ENCODE measurements at regions of chr1 and their contacts with region 1.

Region 1: GRCh38 chr1:110312188-110313121 is 26.7 kb upstream of the RBM15 start:
- DNase-seq: peak; percentile 91
- H3K4me3 Mint-ChIP-seq: no peak overlapping the region
- H3K27ac Mint-ChIP-seq: no peak overlapping the region
- H3K4me1 Mint-ChIP-seq: no peaks in the 10 kb centered on the region
- H3K27me3 Mint-ChIP-seq: no peaks in the 10 kb centered on the region

Region 2: DNA sequence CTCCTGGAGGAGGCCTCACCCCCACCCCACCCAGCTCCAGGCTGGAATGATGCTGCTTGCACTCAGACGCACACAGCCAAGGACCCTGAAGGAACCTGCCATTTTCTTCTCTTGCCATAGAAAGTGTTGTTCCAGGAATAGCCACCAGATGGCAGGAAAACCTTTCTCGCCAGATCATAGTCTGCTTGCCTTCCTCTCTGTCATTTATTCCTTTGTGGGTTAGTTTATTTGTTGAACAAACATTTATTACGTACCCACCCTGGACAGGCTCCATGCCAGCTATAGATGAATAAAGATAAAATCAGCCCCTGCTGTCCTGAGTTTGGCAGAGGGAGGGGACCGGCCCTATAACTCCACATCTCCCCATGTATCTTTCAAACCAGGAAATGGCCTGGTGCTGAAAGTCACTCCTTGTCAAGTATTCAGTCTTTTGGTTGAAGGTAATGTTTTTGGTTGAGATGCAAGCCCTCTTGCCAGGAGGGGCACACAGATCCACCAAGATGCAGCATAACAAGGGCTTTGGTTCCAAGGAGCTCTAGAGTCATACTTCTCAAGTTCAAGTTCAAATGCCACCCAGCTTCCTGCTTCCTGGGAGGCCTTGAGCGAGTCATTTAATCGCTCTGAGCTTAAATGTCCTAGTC is 109.3 kb before region 1 on chr1:
- intact Hi-C with region 1: loop called (anchors 1 kb)
- DNase-seq: peak; percentile 94
- H3K4me3 Mint-ChIP-seq: no peak overlapping the region
- H3K27ac Mint-ChIP-seq: peak overlapping the region; percentile 90
- H3K4me1 Mint-ChIP-seq: peaks cover 13% of the 10 kb centered on the region
- H3K27me3 Mint-ChIP-seq: no peaks in the 10 kb centered on the region

Region 3: GRCh38 chr1:110272045-110272444 is 40.4 kb before region 1 on chr1:
- intact Hi-C with region 1: no loop called
- DNase-seq: no peak
- H3K4me3 Mint-ChIP-seq: no peak overlapping the region
- H3K27ac Mint-ChIP-seq: no peak overlapping the region
- H3K4me1 Mint-ChIP-seq: no peaks in the 10 kb centered on the region
- H3K27me3 Mint-ChIP-seq: peaks cover 28% of the 10 kb centered on the region

Region 4: DNA sequence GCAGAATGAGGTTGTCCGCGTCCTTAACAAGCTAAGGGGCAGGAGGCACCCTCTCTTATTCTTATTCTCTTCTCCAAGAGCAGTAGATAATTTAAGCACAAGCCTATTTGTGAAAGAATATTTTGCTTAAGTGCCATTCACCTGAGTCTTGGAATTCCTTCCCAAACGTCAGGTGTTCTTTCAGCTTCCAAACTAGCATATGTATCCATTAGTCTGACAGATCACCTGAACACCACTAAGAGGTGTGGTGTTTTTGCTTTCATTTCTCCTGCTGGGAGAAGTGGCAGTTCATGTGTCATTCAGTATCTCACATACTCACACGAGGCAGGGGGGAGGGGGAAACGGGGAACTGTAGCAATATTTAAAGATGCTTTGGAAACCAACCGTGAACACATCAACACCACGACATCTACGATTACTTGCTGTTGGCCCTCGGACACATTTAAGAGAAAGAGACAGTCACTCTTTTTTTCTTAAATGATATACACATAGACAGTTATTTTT is 18.8 kb before region 1 on chr1:
- intact Hi-C with region 1: no loop called
- DNase-seq: no peak
- H3K4me3 Mint-ChIP-seq: no peak overlapping the region
- H3K27ac Mint-ChIP-seq: no peak overlapping the region
- H3K4me1 Mint-ChIP-seq: no peaks in the 10 kb centered on the region
- H3K27me3 Mint-ChIP-seq: peaks cover 10% of the 10 kb centered on the region

Region 5: DNA sequence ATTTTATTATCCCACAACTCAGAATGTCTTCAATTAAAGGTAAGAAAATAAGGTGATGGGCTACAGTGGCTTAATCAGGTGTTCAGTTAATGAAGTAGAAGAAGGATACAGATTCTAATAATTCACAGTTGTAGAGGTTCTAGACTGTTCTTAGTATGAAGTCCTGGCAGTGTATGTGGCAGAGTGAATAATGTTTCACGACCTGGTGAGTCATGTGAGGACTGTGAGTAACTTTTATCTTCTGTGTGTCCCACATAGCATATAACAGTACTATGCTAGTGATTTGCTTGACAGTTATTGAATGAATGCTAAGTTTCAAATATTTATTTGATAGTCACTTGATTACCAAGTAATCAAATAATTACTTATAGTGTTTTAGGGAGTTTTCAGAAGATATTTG is 58.4 kb after region 1 on chr1:
- intact Hi-C with region 1: no loop called
- DNase-seq: no peak
- H3K4me3 Mint-ChIP-seq: no peak overlapping the region
- H3K27ac Mint-ChIP-seq: peak overlapping the region; percentile 61
- H3K4me1 Mint-ChIP-seq: peaks cover 9% of the 10 kb centered on the region
- H3K27me3 Mint-ChIP-seq: no peaks in the 10 kb centered on the region

Measured in activated CD4-positive, alpha-beta T cell treated with anti-CD3 and anti-CD28 coated beads, Interleukin-2, amount 10 ng/mL, durations not matched to agents 24 days and 14 days (primary cell).